Activated CD8-positive, alpha-beta T cell treated with anti-CD3 and anti-CD28 coated beads, Interleukin-2, amount 10 ng/mL, durations not matched to agents 7 days and 5 days (primary cell): ENCODE measurements at regions of chr16 and their contacts with region 1.

Region 1: GRCh38 chr16:31440516-31441184 is 1.9 kb downstream of the ZNF843 start:
- DNase-seq: no peak
- ATAC-seq: no peak
- H3K4me3 Mint-ChIP-seq: no peak overlapping the region
- H3K27ac Mint-ChIP-seq: no peak overlapping the region
- H3K4me1 Mint-ChIP-seq: peaks cover 29% of the 10 kb centered on the region
- H3K27me3 Mint-ChIP-seq: peaks cover 5% of the 10 kb centered on the region

Region 2: GRCh38 chr16:31202414-31203375 is 238.0 kb before region 1 on chr16 and contains the start of gene PYCARD:
- CTCF ChIA-PET with region 1: interaction called, 42 read pairs
- POLR2A ChIA-PET with region 1: interaction called, 11 read pairs
- DNase-seq: peak; percentile 58
- ATAC-seq: peak; percentile 37
- H3K4me3 Mint-ChIP-seq: peak within 1 kb of the TSS; percentile 89
- H3K27ac Mint-ChIP-seq: peak within 1 kb of the TSS; percentile 64
- H3K4me1 Mint-ChIP-seq: peaks cover 62% of the 10 kb centered on the region
- H3K27me3 Mint-ChIP-seq: no peaks in the 10 kb centered on the region
- total RNA-seq, gene PYCARD: 97.7 to 99.5 TPM

Region 3: DNA sequence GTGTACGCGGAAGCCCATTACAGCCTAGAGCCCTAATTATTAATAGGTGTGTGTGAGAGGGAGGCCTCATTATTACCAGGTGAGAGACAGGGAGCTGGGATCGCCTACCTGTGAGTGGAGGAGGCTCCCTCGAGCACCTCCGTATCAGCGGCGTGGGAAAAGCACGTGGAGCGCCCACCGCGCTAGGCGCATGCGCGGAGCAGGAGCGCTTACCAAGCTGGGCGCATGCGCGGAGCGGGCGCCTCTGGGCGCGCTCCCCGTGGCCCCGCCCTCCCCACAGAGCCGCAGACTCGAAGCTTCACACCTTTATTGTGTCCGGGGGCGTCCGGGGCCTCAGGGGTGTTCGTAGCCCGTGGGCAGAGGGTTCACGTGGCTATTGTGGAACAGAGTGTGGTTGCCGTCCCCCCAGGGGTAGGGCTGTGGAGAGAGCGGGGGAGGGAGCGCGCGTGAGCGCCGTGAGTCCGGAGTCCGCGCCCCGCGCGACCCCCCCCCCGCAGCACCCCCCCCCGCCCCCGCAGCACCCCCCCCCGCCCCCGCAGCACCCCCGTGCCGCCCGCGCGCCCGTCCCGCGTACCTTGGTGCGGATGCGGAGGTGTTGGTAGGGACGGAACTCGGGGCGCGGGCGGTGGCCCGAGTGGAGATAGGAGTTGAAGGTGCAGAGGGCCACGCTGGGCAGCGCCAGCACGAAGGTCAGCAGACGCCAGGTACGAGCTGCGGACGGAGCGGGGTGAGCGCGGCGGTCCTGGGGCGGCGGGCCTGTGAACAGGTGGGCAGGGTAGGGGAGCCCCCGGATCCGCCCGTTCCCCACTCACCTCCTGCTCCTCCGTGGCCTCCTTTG is 13.0 kb before region 1 on chr16:
- CTCF ChIA-PET with region 1: interaction called, 25 read pairs
- POLR2A ChIA-PET with region 1: interaction called, 6 read pairs
- DNase-seq: peak; percentile 62
- ATAC-seq: peak; percentile 35
- H3K4me3 Mint-ChIP-seq: no peak overlapping the region
- H3K27ac Mint-ChIP-seq: no peak overlapping the region
- H3K4me1 Mint-ChIP-seq: peaks cover 59% of the 10 kb centered on the region
- H3K27me3 Mint-ChIP-seq: peaks cover 10% of the 10 kb centered on the region

Region 4: DNA sequence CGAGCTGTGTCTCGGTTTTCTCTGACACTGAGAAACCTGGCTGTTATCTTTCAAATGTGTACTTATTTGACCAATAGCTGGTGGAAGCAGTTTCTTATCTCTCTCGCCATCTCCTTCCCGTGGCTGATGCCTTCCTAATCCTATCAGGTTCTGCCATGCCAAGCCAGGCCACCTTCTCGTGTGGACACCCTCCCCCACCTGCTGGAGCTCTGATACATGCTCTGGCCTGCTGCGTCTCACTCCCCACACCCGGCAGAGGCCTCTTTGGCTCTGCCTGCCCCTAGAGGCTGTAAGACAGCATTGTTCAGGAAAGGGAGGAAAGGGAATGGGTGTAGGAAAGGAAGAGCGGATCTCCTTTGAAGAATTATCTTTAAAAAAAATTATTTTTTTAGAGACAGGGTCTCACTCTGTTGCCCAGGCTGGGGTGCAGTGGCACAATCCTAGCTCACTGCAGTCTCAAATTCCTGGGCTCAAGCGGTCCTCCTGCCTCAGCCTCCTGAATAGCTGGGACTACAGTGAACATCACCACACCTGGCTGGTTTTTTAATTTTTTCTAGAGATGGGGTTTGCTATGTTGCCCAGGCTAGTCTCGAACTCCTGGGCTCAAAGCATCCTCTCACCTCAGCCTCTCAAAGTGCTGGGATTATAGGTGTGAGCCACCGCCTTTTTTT is 11.2 kb after region 1 on chr16:
- CTCF ChIA-PET with region 1: interaction called, 40 read pairs
- POLR2A ChIA-PET with region 1: interaction called, 4 read pairs
- DNase-seq: no peak
- ATAC-seq: no peak
- H3K4me3 Mint-ChIP-seq: no peak overlapping the region
- H3K27ac Mint-ChIP-seq: no peak overlapping the region
- H3K4me1 Mint-ChIP-seq: peaks cover 42% of the 10 kb centered on the region
- H3K27me3 Mint-ChIP-seq: no peaks in the 10 kb centered on the region

Region 5: GRCh38 chr16:31466886-31467773 is 26.5 kb after region 1 on chr16:
- CTCF ChIA-PET with region 1: no interaction called
- POLR2A ChIA-PET with region 1: no interaction called
- DNase-seq: peak; percentile 40
- ATAC-seq: peak; percentile 45
- H3K4me3 Mint-ChIP-seq: peak overlapping the region; percentile 28
- H3K27ac Mint-ChIP-seq: peak overlapping the region; percentile 87
- H3K4me1 Mint-ChIP-seq: peaks cover 19% of the 10 kb centered on the region
- H3K27me3 Mint-ChIP-seq: peaks cover 9% of the 10 kb centered on the region